ENCODE measurements at regions of chr1 and their contacts with region 1.

Region 1: GRCh38 chr1:93007941-93008577 is 46.8 kb upstream of the DIPK1A start:
- DNase-seq: no peak
- H3K4me3 ChIP-seq: no peak overlapping the region
- H3K27ac ChIP-seq: no peak overlapping the region
- H3K4me1 ChIP-seq: no peaks in the 10 kb centered on the region
- H3K27me3 ChIP-seq: no peaks in the 10 kb centered on the region
- CTCF ChIP-seq: no peak
- POLR2A ChIP-seq: no peak

Region 2: DNA sequence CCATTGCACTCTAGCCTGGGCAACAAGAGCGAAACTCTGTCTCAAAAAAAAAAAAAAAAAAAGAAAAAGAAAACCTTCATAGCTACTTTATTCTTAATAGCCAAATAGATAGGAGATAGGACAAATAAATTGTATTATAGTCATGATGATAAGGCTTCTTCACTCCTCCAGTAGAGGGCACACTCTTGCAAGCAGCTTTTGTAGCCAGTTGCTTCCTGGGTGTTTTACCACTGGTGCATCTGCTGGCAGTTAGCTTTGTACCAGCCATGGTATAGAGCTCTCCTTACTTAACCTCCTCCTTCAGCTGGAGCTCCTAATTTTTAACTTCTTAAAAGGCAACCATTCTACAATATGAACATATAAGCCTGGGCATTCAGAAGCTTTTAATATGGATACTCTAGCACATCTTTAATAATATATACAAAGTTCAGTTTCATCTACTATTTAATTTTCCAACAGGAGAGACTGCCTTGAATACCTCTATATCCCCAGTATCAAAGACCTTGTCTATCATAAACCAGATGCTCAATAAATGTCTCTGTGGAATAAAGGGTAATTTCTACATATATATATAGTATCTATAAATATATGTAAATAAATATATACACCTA is 258.9 kb before region 1 on chr1:
- intact Hi-C with region 1: no loop called
- DNase-seq: peak; percentile 45
- H3K4me3 ChIP-seq: no peak overlapping the region
- H3K27ac ChIP-seq: no peak overlapping the region
- H3K4me1 ChIP-seq: no peaks in the 10 kb centered on the region
- H3K27me3 ChIP-seq: no peaks in the 10 kb centered on the region
- CTCF ChIP-seq: peak in 2 of 3 experiments; percentile 11 to 27
- POLR2A ChIP-seq: no peak

Region 3: DNA sequence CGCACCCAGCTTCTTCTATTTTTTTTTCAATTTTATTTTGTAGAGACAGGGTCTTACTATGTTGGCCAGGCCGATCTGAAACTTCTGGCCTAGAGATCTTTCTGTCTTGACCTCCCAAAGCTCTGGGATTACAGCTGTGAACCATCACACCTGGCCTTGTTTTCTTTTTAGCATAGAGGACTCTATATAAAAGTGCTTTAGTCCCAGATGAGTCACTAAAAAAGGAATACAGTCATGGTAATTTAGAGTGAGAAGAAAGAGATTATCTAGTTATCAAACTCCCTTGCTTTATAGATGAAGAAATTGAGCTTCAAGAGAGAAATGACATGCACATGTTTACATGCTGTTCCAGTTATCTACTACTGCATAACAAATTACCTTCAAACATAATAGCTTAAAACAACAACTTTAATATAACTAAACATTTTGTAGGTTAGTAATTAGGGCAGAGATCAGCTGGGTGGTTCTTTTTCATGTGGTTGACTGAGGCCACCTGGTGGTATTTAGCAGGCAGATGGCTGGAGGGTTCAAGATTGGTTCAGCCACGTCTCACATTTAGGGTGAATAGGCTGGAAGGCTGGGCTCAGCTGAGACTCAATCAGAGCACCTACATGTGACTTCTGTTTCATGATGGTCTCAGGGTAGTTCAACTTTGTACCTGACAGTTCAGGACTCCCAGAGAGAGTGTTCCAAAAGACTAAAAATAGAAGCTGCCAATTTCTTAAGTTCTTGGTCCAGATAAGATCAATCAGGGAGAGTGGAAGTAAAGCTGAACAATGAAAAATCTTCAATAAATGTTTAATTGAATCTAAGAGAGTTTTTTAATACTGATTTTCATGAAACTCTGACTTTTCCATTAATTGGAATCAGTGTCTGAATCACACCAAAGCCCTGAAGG is 54.1 kb after region 1 on chr1:
- intact Hi-C with region 1: no loop called
- DNase-seq: peak; percentile 69
- H3K4me3 ChIP-seq: no peak overlapping the region
- H3K27ac ChIP-seq: no peak overlapping the region
- H3K4me1 ChIP-seq: no peaks in the 10 kb centered on the region
- H3K27me3 ChIP-seq: no peaks in the 10 kb centered on the region
- CTCF ChIP-seq: peak in 2 of 3 experiments; percentile 37 to 50
- POLR2A ChIP-seq: no peak

Region 4: DNA sequence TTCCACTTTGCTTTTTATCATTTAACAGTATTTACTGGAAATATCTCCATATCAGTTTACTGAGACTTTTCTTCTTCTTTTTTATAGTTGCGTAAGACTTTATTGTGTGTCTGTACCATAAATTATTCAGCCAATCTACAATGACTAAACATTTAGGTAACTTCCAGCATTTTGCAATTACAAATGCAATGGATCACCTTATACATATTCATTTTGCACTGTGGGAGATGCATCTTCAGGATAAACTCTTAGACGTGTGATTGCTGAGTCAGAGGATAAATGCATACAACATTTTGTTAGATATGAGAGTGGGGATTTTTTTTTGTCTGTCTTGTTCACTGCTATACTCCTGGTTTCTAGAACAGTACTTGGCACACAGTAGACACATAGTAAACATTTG is 996.9 kb after region 1 on chr1:
- intact Hi-C with region 1: loop called (anchors 5 kb)
- DNase-seq: no peak
- H3K4me3 ChIP-seq: no peak overlapping the region
- H3K27ac ChIP-seq: no peak overlapping the region
- H3K4me1 ChIP-seq: no peaks in the 10 kb centered on the region
- H3K27me3 ChIP-seq: no peaks in the 10 kb centered on the region
- CTCF ChIP-seq: no peak
- POLR2A ChIP-seq: no peak

Measured in testis (tissue), 5 donors.